ENCODE measurements at regions of chr11 and their contacts with region 1.

Region 1: GRCh38 chr11:132925825-132926469 is 606.4 kb downstream of the OPCML start:
- DNase-seq: no peak
- CTCF ChIP-seq: no peak

Region 2: GRCh38 chr11:132844956-132845696 is 80.8 kb before region 1 on chr11:
- CTCF ChIA-PET with region 1: no interaction called
- POLR2A ChIA-PET with region 1: no interaction called
- DNase-seq: no peak
- CTCF ChIP-seq: no peak

Region 3: DNA sequence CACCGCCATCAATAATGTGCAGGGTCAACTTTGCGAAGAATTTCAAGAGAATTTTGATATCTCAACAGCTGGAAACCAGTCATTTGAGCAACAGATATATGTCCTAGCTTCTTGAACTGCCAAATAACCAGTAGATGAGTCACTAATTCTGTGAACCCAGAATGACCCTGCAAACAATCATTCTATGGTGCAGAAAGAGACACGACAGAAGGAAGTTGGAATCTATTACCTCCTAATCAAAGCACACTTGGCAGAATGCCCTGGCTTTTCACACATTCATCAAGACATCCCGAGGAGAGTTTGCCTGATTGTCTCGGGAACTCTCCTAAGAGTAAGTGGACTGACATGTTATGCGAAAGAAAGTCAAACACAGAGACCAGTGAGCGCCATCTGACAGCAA is 14.8 kb before region 1 on chr11:
- CTCF ChIA-PET with region 1: no interaction called
- POLR2A ChIA-PET with region 1: no interaction called
- DNase-seq: no peak
- CTCF ChIP-seq: no peak

Region 4: GRCh38 chr11:132941024-132941646 is 15.2 kb after region 1 on chr11:
- CTCF ChIA-PET with region 1: interaction called, 22 read pairs
- POLR2A ChIA-PET with region 1: no interaction called
- DNase-seq: no peak
- CTCF ChIP-seq: peak; percentile 73

Region 5: DNA sequence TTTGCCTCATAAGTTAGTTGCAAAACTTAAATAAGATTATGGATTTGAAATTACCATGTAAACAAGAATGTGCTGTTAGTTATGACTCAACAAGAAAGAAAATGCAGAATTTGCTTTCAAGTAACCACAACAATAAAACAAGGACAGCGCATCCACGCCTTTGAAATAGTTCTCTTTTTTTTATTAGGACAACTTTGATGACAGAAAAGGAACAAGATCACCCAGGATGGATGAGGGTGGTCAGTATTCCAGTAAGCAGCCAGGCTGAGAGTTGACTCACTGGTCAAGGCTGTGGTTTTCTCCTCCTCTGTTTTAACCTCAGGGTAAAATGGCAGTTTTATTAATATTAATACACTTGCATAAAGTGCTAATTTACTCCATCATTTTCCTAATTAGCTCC is 62.0 kb after region 1 on chr11:
- CTCF ChIA-PET with region 1: no interaction called
- POLR2A ChIA-PET with region 1: no interaction called
- DNase-seq: no peak
- CTCF ChIP-seq: no peak

Measured in GM10248 (cell line).